Endothelial cell of umbilical vein (primary cell): ENCODE measurements at regions of chr1 and their contacts with region 1.

Region 1: GRCh38 chr1:236659792-236660587 is 26.3 kb upstream of the ACTN2 start:
- DNase-seq: no peak
- H3K4me3 ChIP-seq: no peak overlapping the region
- H3K27ac ChIP-seq: no peak overlapping the region
- H3K4me1 ChIP-seq: no peaks in the 10 kb centered on the region
- H3K27me3 ChIP-seq: no peaks in the 10 kb centered on the region
- CTCF ChIP-seq: no peak
- POLR2A ChIP-seq: no peak

Region 2: DNA sequence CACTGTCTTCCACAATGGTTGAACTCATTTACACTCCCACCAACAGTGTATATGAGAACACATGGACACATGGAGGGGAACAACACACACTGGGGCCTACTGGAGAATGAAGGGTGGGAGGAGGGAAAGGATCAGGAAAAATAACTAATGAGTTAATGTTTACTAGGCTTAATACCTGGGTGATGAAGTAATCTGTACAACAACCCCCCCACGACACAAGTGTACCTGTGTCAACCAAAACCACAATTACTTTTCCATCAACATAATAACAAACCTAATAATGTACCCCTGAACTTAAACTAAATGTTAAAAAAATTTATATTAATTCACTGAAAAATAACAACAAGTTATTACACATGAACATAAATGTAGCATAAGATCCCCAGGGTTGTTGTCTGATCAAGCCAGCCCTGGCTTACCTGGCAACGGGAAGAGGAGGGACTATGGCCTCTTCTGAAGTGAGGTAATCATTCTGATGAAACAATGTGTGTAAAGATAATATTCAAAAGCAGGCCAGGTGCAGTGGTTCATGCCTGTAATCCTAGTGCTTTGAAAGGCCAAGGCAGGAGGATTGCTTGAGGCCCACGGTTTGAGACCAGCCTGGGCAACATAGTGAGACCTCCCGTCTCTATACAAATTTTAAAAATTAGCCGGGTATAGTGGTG is 14.8 kb before region 1 on chr1:
- CTCF ChIA-PET with region 1: no interaction called
- POLR2A ChIA-PET with region 1: no interaction called
- dilution Hi-C with region 1: no loop called
- intact Hi-C with region 1: loop called (anchors 2 kb)
- DNase-seq: no peak
- H3K4me3 ChIP-seq: no peak overlapping the region
- H3K27ac ChIP-seq: no peak overlapping the region
- H3K4me1 ChIP-seq: no peaks in the 10 kb centered on the region
- H3K27me3 ChIP-seq: no peaks in the 10 kb centered on the region
- CTCF ChIP-seq: no peak
- POLR2A ChIP-seq: no peak